Activated naive CD4-positive, alpha-beta T cell treated with anti-CD3 and anti-CD28 coated beads for 36 hours (primary cell): ENCODE measurements at regions of chr7 and their contacts with region 1.

Region 1: GRCh38 chr7:2354186-2354938 is at the start of gene EIF3B:
- DNase-seq: peak; percentile 94
- H3K4me3 Mint-ChIP-seq: peak within 1 kb of the TSS; percentile 87
- H3K27ac Mint-ChIP-seq: peak within 1 kb of the TSS; percentile 99
- H3K4me1 Mint-ChIP-seq: peaks cover 33% of the 10 kb centered on the region
- H3K27me3 Mint-ChIP-seq: no peaks in the 10 kb centered on the region
- total RNA-seq, gene EIF3B: 156 to 159 TPM

Region 2: DNA sequence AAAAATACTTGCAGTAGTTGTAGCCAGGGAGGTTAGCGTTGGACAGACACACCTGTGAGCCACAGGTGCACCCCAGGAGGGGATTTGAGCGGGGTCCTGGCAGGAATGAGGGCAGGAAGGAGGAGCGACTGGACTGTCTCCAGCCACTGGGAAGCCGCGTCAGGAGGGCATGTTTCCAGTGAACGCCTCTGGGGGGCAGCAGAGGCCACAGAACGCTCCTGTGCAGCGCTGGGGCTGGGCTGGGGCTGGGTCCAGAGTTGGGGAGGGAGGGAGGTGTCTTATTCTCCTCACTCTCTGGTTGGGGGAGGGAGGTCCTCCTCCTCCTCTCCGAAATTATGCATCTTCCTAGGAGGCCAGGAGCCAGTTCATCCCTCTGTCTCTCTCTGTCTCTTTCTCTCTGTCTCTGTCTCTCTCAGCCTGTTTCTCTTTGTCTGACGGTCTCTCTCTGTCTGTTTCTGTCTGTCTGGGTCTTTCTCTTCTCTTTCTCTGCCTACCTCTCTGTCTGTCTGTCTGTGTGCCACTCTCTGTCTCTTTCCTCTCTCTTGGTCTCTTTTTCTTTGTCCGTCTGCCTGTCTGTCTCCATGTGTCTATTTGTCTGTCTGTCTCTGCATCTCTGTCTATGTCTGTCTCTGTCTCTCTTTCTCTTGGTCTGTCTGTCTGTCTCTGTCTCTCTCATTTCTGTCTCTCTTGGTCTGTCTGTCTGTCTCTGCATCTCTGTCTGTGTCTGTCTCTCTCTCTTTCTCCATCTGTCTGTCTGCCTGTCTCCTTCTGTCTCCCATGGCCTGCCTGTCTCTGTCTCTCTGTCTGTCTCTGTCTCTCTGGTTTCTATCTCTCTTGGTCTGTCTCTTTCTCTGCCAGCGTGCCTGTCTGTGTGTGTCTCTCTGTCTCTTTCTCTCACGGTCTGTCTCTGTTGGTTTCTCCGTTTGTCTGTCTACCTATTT is 774.6 kb before region 1 on chr7:
- CTCF ChIA-PET with region 1: no interaction called
- intact Hi-C with region 1: loop called (anchors 2 kb)
- DNase-seq: peak; percentile 79
- H3K4me3 Mint-ChIP-seq: no peak overlapping the region
- H3K27ac Mint-ChIP-seq: no peak overlapping the region
- H3K4me1 Mint-ChIP-seq: peaks cover 7% of the 10 kb centered on the region
- H3K27me3 Mint-ChIP-seq: no peaks in the 10 kb centered on the region

Region 3: GRCh38 chr7:1925349-1925748 is 429.0 kb before region 1 on chr7:
- CTCF ChIA-PET with region 1: no interaction called
- intact Hi-C with region 1: loop called (anchors 5 kb)
- DNase-seq: peak; percentile 37
- H3K4me3 Mint-ChIP-seq: no peak overlapping the region
- H3K27ac Mint-ChIP-seq: no peak overlapping the region
- H3K4me1 Mint-ChIP-seq: peaks cover 75% of the 10 kb centered on the region
- H3K27me3 Mint-ChIP-seq: peaks cover 6% of the 10 kb centered on the region

Region 4: GRCh38 chr7:2241580-2242540 is 112.5 kb before region 1 on chr7 and contains the starts of genes MRM2 and NUDT1:
- CTCF ChIA-PET with region 1: no interaction called
- intact Hi-C with region 1: loop called (anchors 2 kb)
- DNase-seq: peak; percentile 72
- H3K4me3 Mint-ChIP-seq: peak within 1 kb of the TSS; percentile 97
- H3K27ac Mint-ChIP-seq: peak within 1 kb of the TSS; percentile 93
- H3K4me1 Mint-ChIP-seq: peaks cover 17% of the 10 kb centered on the region
- H3K27me3 Mint-ChIP-seq: no peaks in the 10 kb centered on the region
- total RNA-seq, gene MRM2: 21.0 to 24.0 TPM
- total RNA-seq, gene NUDT1: 115 to 118 TPM

Region 5: DNA sequence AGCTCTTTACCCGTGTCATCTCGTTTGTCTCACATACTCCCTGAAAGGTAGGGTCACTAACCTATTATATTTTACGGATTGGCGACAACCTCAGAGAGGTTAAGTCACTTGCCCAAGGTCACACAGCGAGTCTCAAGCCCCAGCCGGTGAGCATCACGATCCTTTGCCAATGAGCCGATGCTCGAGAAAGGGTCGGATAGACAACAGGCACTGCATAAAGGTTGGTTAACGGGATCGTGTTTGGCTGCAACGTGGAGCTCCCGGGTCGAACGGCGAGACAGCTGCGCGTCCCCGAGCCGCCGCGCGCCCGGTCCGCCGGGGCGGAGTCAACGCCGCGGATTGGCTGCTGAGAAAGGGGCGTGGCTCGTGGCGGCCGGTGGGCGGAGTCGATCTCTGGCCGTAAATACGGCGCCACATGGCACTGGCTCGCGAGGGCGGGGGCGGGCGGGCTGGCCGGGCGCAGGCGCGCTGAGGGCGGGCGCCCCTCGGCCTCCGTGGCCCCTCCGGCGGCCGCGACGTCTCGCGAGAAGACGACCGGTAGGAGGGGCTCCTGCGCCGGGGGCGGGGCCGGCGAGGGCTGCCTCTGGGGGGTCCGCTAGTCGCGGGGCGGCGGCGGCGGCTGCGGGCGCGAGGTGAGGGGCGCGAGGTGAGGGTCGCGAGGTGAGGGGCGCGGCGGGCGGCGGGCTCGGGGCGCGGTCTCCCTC is 48.8 kb after region 1 on chr7 and contains the start of gene CHST12:
- CTCF ChIA-PET with region 1: no interaction called
- intact Hi-C with region 1: loop called (anchors 1 kb)
- DNase-seq: peak; percentile 93
- H3K4me3 Mint-ChIP-seq: peak within 1 kb of the TSS; percentile 80
- H3K27ac Mint-ChIP-seq: no peak within 1 kb of the TSS
- H3K4me1 Mint-ChIP-seq: peaks cover 40% of the 10 kb centered on the region
- H3K27me3 Mint-ChIP-seq: no peaks in the 10 kb centered on the region
- total RNA-seq, gene CHST12: 0.62 to 0.64 TPM

Region 6: DNA sequence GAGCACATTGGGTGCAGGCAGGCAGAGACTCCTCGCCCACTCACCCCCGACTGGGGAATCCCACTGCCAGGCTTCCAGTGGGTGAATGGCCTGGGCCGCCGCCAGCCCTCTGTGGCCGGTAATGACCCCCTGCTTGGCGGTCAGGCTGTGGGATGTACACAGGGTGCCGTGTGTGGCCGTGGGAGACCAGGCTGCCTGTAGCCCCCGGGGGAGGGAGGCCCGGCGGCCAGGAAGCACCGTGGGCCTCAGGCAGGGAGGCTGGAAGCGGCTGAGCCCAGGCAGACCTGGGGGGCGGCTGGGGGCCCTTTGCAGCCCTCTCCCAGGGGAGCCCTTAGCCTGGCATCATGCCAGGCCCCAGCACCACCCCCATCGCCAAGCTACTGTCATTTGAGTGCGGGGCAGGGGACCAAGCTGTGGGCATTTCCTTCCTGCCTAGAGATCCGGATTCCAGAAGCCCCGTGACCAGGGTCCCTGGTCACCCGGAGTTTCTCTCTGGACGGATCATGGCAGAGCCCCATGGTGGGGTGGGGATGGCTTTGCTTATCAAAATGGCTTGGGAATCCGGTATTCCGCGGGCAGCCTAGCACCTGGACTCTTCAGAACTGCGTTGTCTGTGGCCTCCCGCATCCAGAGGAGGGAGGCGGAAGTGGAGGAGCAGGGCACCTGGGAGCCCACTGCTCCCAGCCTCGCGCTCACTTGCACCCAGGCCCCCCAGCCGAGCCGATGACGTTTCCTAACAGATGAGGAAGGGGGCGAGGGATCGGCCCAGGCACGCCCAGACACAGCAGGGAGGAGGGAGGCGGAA is 278.6 kb after region 1 on chr7:
- CTCF ChIA-PET with region 1: no interaction called
- intact Hi-C with region 1: loop called (anchors 1 kb)
- DNase-seq: peak; percentile 67
- H3K4me3 Mint-ChIP-seq: peak overlapping the region; percentile 92
- H3K27ac Mint-ChIP-seq: peak overlapping the region; percentile 53
- H3K4me1 Mint-ChIP-seq: peaks cover 15% of the 10 kb centered on the region
- H3K27me3 Mint-ChIP-seq: no peaks in the 10 kb centered on the region